ENCODE measurements at regions of chr17 and their contacts with region 1.

Region 1: DNA sequence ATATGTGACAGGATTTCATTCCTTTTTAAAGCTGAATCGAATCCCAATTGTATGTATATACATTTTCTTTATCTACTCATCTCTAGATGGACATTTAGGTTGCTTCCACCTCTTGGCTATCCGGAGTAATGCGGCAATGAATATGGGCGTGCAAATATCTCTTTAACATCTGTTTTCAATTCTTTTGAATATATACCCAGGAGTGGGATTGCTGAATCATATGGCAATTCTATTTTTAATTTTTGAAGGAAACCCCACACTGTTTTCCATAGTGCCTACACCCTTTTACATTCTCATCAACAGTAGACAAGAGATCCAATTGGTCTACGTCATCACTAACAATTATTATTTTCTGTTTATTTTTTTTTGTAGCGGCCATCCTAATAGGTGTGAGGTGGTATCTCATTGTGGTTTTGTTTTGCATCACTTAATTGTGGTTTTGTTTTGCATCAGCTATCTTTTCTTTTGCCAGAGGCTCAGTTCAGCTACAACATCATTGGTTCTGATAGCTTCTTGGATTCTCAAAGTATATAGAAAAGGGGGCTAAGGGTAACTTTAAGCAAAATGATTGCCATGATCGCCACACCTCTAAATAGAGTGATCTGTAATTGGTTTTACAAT is 25.6 kb upstream of the MAP2K6 start:
- DNase-seq: no peak
- ATAC-seq: peak; percentile 49
- H3K4me3 ChIP-seq: no peak overlapping the region
- H3K27ac ChIP-seq: no peak overlapping the region
- H3K4me1 ChIP-seq: peaks cover 9% of the 10 kb centered on the region
- H3K27me3 ChIP-seq: no peaks in the 10 kb centered on the region
- CTCF ChIP-seq: no peak
- EP300 ChIP-seq: no peak
- POLR2A ChIP-seq: no peak
- RAD21 ChIP-seq: no peak

Region 2: DNA sequence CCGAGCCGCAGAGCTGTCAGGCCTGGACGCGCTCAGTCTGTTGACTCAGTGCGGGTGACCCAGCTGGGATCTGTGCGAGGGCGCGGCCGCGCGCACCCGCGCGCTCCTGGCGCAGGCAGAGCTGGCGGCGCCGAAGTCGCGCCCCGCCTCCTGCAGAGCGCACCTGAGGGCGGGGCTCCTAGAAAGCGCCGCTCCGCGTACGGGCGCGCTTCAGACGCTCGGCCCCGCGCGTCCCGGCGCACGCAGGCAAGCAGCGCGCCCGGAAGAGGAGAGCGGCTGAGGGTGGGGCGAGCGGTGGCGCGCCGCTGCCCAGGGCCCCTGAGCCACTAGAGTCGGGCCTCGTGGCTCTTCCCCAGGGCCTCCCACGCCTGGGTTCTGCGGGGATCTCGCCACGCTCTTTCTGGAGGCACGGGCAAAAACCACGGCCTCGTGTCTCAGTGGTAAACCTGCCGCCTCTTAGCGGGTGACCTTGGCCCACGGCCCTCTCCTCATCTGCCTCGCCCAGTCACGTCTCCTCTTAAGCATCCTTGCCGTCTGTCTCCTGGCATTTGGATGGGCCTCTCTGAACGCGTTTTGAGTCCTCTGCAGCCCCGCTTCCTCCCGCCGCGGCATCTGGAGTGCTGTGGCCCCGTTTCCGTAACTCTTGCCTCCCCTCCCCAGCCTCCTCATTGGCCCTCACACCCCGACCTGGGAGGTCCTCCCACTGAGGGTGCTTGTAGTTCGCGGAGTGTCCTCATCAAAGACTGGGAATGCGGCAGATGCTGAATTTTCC is 61.7 kb before region 1 on chr17 and contains the start of gene ABCA5:
- CTCF ChIA-PET with region 1: no interaction called
- POLR2A ChIA-PET with region 1: no interaction called
- RAD21 ChIA-PET with region 1: no interaction called
- SMC1A ChIA-PET with region 1: no interaction called
- in situ Hi-C with region 1: no loop called
- intact Hi-C with region 1: loop called (anchors 5 kb)
- DNase-seq: peak; percentile 69
- ATAC-seq: peak; percentile 96
- H3K4me3 ChIP-seq: peak within 1 kb of the TSS; percentile 76
- H3K27ac ChIP-seq: peak within 1 kb of the TSS; percentile 85
- H3K4me1 ChIP-seq: no peaks in the 10 kb centered on the region
- H3K27me3 ChIP-seq: no peaks in the 10 kb centered on the region
- CTCF ChIP-seq: no peak
- EP300 ChIP-seq: no peak
- POLR2A ChIP-seq: peak; percentile 98
- RAD21 ChIP-seq: no peak
- polyA plus RNA-seq, gene ABCA5: 11.8 to 31.1 TPM

Region 3: DNA sequence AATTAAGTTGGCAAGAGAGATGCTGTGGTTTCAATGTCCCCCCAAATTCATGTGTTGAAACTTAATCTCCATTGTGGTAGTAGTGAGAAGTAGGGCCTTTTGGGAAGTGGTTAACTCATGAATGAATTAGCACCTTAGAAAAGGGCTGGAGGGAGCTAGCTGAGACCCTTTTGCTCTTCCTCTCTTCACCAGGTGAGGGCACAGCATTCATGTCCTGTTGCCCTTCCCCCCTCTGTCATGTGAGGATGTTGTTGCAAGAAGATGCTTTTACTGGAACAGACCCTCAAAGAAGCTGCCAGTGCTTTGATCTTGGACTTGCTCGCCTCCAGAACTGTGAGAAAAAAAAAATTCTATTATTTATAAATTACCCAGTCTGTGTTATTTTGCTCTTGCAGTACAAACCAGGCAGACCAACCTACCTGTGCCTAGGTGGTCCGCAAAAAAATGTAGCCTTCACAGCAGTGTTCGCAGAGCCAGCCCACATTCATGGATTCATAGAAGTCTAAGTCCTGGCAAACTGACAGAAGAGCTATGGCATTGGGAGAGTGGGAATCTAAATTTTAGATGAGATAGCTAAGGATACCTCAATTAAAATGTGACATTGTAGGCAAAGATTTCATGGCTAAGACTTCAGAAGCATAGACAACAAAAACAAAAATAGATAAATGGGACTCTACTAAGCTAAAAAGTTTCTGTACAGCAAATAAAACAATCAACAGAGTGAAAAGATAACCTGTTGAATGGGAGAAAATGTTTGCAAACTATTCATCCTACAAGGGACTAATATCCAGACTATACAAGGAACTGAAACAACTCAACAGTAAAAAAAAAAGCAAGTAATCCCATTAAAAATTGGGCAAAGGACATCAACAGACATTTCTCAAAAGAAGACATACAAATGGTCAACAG is 30.0 kb before region 1 on chr17:
- CTCF ChIA-PET with region 1: interaction called, 18 read pairs
- POLR2A ChIA-PET with region 1: no interaction called
- RAD21 ChIA-PET with region 1: no interaction called
- SMC1A ChIA-PET with region 1: no interaction called
- in situ Hi-C with region 1: no loop called
- intact Hi-C with region 1: no loop called
- DNase-seq: peak; percentile 4
- ATAC-seq: peak; percentile 72
- H3K4me3 ChIP-seq: no peak overlapping the region
- H3K27ac ChIP-seq: no peak overlapping the region
- H3K4me1 ChIP-seq: no peaks in the 10 kb centered on the region
- H3K27me3 ChIP-seq: no peaks in the 10 kb centered on the region
- CTCF ChIP-seq: peak; percentile 42 to 52 (median 46); a peak in 5 of 6 replicates
- EP300 ChIP-seq: no peak
- POLR2A ChIP-seq: no peak
- RAD21 ChIP-seq: peak; percentile 52

Region 4: DNA sequence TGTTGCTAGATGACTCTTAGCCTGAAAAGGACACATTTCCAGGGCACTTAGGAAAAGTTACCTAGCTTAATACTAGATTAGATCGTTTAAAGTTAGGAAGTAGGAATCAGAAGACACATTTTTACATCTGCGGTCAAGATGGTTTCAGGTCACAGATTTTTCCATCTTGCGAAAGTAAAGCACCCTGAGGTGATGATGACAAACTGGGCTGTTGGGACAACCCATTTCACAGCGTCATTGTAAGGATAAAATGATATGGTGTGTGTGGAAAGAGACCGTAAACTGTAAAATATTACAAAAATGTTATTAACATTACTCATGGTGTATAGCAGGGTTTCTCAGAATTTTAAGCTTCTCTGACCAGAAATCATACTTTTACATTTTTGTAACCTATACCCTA is 15.4 kb after region 1 on chr17:
- CTCF ChIA-PET with region 1: interaction called, 30 read pairs
- POLR2A ChIA-PET with region 1: no interaction called
- RAD21 ChIA-PET with region 1: no interaction called
- SMC1A ChIA-PET with region 1: interaction called, 5 read pairs
- in situ Hi-C with region 1: no loop called
- intact Hi-C with region 1: no loop called
- DNase-seq: no peak
- ATAC-seq: no peak
- H3K4me3 ChIP-seq: no peak overlapping the region
- H3K27ac ChIP-seq: no peak overlapping the region
- H3K4me1 ChIP-seq: no peaks in the 10 kb centered on the region
- H3K27me3 ChIP-seq: no peaks in the 10 kb centered on the region
- CTCF ChIP-seq: no peak
- EP300 ChIP-seq: no peak
- POLR2A ChIP-seq: no peak
- RAD21 ChIP-seq: no peak

Region 5: GRCh38 chr17:70029019-70029767 is 640.3 kb after region 1 on chr17:
- CTCF ChIA-PET with region 1: no interaction called
- POLR2A ChIA-PET with region 1: no interaction called
- RAD21 ChIA-PET with region 1: no interaction called
- SMC1A ChIA-PET with region 1: no interaction called
- in situ Hi-C with region 1: no loop called
- intact Hi-C with region 1: no loop called
- DNase-seq: no peak
- ATAC-seq: no peak
- H3K4me3 ChIP-seq: no peak overlapping the region
- H3K27ac ChIP-seq: no peak overlapping the region
- H3K4me1 ChIP-seq: no peaks in the 10 kb centered on the region
- H3K27me3 ChIP-seq: no peaks in the 10 kb centered on the region
- CTCF ChIP-seq: no peak
- EP300 ChIP-seq: no peak
- POLR2A ChIP-seq: no peak
- RAD21 ChIP-seq: no peak

Measured in GM12878 (cell line).